Aorta (tissue), 5 donors: ENCODE measurements at regions of chr17 and their contacts with region 1.

Region 1: GRCh38 chr17:70636517-70637133 is 467.3 kb downstream of the KCNJ2 start:
- DNase-seq: no peak
- ATAC-seq: no peak
- H3K4me3 ChIP-seq: no peak overlapping the region
- H3K27ac ChIP-seq: no peak overlapping the region
- H3K4me1 ChIP-seq: no peaks in the 10 kb centered on the region
- H3K27me3 ChIP-seq: peaks cover 0 to 1% of the 10 kb centered on the region in 2 donors

Region 2: GRCh38 chr17:70563281-70563820 is 73.3 kb before region 1 on chr17:
- intact Hi-C with region 1: no loop called
- DNase-seq: no peak
- ATAC-seq: no peak
- H3K4me3 ChIP-seq: no peak overlapping the region
- H3K27ac ChIP-seq: no peak overlapping the region
- H3K4me1 ChIP-seq: no peaks in the 10 kb centered on the region
- H3K27me3 ChIP-seq: no peaks in the 10 kb centered on the region

Region 3: GRCh38 chr17:72539981-72540897 is 1903.6 kb after region 1 on chr17:
- intact Hi-C with region 1: loop called (anchors 5 to 10 kb)
- DNase-seq: peak; percentile 66 to 91
- ATAC-seq: peak; percentile 93
- H3K4me3 ChIP-seq: no peak overlapping the region
- H3K27ac ChIP-seq: no peak overlapping the region
- H3K4me1 ChIP-seq: no peaks in the 10 kb centered on the region
- H3K27me3 ChIP-seq: no peaks in the 10 kb centered on the region